ENCODE measurements at regions of chr6 and their contacts with region 1.

Region 1: GRCh38 chr6:73180763-73181619 is 44.3 kb downstream of the KHDC1L start:
- DNase-seq: peak; percentile 69
- H3K4me3 ChIP-seq: peak overlapping the region; percentile 33
- CTCF ChIP-seq: peak; percentile 79

Region 2: DNA sequence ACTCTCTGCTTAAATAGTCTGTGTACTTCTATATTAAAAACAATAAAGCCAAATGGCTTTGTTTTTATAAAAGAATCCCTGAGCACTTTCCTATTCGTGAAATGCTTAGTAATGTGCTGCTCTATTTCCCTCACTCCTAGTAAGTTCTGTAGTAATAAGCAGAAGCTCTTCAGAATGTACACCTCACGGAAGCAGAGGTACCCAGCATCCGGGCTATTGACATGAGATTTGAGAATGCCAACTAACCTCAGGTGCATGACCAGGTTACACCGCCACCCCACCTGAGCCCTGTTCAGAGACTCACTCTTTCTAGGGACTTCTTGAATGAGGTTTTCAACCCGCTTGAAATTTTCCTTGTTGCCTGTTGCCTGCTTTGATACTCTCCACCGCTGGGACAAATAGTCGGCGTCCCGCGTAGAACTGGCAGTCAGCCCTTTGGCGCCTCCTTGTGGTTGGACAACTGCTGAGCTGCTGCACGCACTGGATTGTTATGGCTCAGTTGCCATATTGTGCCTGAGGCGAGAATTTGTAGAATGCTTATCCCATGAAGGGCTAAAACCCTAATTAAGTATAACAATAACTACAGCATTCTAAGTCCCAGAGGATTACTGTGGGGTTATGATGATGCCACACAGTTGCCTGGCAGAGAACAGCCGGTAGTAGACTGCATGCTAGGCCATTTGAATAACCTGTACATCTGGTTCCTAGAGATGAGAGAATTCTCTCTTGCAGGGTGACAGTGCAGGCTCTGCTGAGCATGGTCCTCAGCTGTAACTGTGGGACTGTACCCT is 51.1 kb before region 1 on chr6:
- in situ Hi-C with region 1: loop called (anchors 5 kb)
- DNase-seq: peak; percentile 72
- H3K4me3 ChIP-seq: no peak overlapping the region
- CTCF ChIP-seq: peak; percentile 99

Measured in astrocyte of the cerebellum (primary cell).